ENCODE measurements at regions of chr5 and their contacts with region 1.

Region 1: GRCh38 chr5:39714036-39714698 is 289.4 kb upstream of the DAB2 start:
- DNase-seq: peak; percentile 68
- ATAC-seq: peak; percentile 69; the same call in 1 of the 2 replicates
- H3K4me3 ChIP-seq: no peak overlapping the region
- H3K27ac ChIP-seq: no peak overlapping the region
- H3K4me1 ChIP-seq: peaks cover 8% of the 10 kb centered on the region
- H3K27me3 ChIP-seq: no peaks in the 10 kb centered on the region
- CTCF ChIP-seq: peak; percentile 84
- POLR2A ChIP-seq: no peak
- RAD21 ChIP-seq: peak; percentile 89

Region 2: GRCh38 chr5:39578887-39579497 is 135.2 kb before region 1 on chr5:
- CTCF ChIA-PET with region 1: interaction called, 3 read pairs
- POLR2A ChIA-PET with region 1: no interaction called
- dilution Hi-C with region 1: no loop called
- in situ Hi-C with region 1: no loop called
- intact Hi-C with region 1: loop called (anchors 5 kb)
- DNase-seq: peak; percentile 49
- ATAC-seq: no peak
- H3K4me3 ChIP-seq: no peak overlapping the region
- H3K27ac ChIP-seq: no peak overlapping the region
- H3K4me1 ChIP-seq: no peaks in the 10 kb centered on the region
- H3K27me3 ChIP-seq: peaks cover 7% of the 10 kb centered on the region
- CTCF ChIP-seq: peak; percentile 61
- POLR2A ChIP-seq: no peak
- RAD21 ChIP-seq: peak; percentile 64

Region 3: DNA sequence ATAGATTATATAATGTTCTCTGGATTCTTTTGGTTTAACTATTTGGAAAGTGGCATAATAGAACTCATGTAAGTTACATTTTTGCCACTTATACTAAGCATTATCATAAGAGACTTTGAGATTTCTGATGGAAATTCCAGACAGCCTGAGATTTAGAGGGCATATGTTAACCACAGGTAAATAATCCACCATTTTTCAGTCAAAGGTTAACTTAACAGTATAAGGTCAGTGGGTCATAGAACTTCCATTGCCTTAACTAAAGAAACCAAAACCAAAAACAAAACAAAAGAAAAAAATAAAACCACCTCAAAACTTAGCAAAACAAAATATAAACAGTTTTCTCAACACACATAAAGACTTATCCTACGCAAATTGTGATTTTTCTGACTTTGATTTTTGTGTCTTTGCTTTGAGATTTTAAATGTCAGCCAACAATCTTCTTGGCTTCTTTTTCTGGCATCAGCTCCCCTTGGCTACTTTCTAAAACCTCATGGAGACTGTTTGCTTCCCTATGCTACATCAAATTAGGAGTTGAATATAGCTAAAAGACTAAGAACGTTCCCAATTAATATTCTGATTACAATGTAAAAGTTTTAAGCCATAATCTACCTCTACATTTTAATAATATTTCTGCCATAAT is 140.7 kb after region 1 on chr5:
- CTCF ChIA-PET with region 1: no interaction called
- POLR2A ChIA-PET with region 1: no interaction called
- dilution Hi-C with region 1: no loop called
- in situ Hi-C with region 1: no loop called
- intact Hi-C with region 1: no loop called
- DNase-seq: no peak
- ATAC-seq: no peak
- H3K4me3 ChIP-seq: no peak overlapping the region
- H3K27ac ChIP-seq: no peak overlapping the region
- H3K4me1 ChIP-seq: no peaks in the 10 kb centered on the region
- H3K27me3 ChIP-seq: no peaks in the 10 kb centered on the region; the same call in 1 of the 2 replicates
- CTCF ChIP-seq: no peak
- POLR2A ChIP-seq: no peak
- RAD21 ChIP-seq: no peak

Region 4: DNA sequence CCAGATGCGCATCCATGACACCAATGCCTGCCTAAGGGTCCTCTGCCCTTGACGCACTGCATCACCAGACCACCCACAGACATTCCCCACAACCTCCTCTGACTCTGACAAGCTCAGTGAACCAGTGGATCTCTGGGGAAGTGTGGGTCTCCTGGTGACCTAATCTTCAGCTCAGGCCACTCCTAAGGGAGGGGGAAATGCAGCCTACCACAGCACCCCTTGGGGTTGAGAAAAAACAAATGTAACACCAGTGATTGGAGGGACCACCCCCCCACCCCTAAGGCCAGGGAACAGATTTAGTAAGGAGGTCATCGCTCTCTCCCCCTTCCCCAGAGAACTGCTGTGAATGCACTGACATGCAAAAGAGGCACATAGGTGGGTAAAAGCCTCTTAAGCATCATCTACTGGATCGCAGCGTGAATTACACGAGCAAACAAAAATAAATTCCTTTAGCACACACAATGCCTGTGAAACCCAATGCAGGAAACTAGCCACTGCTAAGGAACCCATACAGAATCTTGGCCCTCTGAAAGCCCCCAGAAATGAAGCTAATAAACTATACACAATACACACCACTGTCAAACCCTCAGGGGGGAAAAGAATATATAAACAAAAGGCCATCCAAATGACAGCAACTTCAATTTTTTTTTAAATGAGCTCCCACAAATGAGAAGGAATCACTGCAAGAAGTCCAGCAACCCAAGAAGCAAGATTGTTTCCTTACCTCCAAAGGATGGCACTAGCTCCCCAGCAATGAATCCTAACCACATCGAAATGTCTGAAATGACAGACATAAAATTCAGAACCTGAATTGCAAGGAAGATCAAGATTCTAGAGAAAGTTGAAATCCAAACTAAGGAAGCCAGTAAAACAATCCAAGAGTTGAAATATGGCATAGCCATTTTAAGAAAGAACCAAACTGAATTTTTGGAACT is 451.9 kb after region 1 on chr5:
- CTCF ChIA-PET with region 1: interaction called, 3 read pairs
- POLR2A ChIA-PET with region 1: no interaction called
- dilution Hi-C with region 1: no loop called
- in situ Hi-C with region 1: no loop called
- intact Hi-C with region 1: loop called (anchors 10 kb)
- DNase-seq: peak; percentile 19
- ATAC-seq: no peak
- H3K4me3 ChIP-seq: no peak overlapping the region
- H3K27ac ChIP-seq: no peak overlapping the region
- H3K4me1 ChIP-seq: no peaks in the 10 kb centered on the region
- H3K27me3 ChIP-seq: no peaks in the 10 kb centered on the region
- CTCF ChIP-seq: peak; percentile 27; the same call in 1 of the 2 replicates
- POLR2A ChIP-seq: no peak
- RAD21 ChIP-seq: peak; percentile 53

Region 5: GRCh38 chr5:40502736-40503135 is 788.6 kb after region 1 on chr5:
- CTCF ChIA-PET with region 1: no interaction called
- POLR2A ChIA-PET with region 1: no interaction called
- dilution Hi-C with region 1: no loop called
- in situ Hi-C with region 1: no loop called
- intact Hi-C with region 1: loop called (anchors 10 kb)
- DNase-seq: no peak
- ATAC-seq: no peak
- H3K4me3 ChIP-seq: no peak overlapping the region
- H3K27ac ChIP-seq: no peak overlapping the region
- H3K4me1 ChIP-seq: peaks cover 2% of the 10 kb centered on the region; the same call in 1 of the 2 replicates
- H3K27me3 ChIP-seq: no peaks in the 10 kb centered on the region
- CTCF ChIP-seq: no peak
- POLR2A ChIP-seq: no peak
- RAD21 ChIP-seq: no peak

Region 6: GRCh38 chr5:40688127-40688761 is 974.1 kb after region 1 on chr5:
- CTCF ChIA-PET with region 1: interaction called, 4 read pairs
- POLR2A ChIA-PET with region 1: interaction called, 3 read pairs
- dilution Hi-C with region 1: no loop called
- in situ Hi-C with region 1: loop called (anchors 5 kb)
- intact Hi-C with region 1: loop called (anchors 1 kb)
- DNase-seq: peak; percentile 89
- ATAC-seq: peak; percentile 86
- H3K4me3 ChIP-seq: no peak overlapping the region
- H3K27ac ChIP-seq: peak overlapping the region; percentile 26; the same call in 1 of the 2 replicates
- H3K4me1 ChIP-seq: peaks cover 5% of the 10 kb centered on the region
- H3K27me3 ChIP-seq: no peaks in the 10 kb centered on the region
- CTCF ChIP-seq: peak; percentile 91
- POLR2A ChIP-seq: no peak; the same call in 1 of the 2 replicates
- RAD21 ChIP-seq: peak; percentile 98

Region 7: GRCh38 chr5:40879163-40879942 is 1165.2 kb after region 1 on chr5:
- CTCF ChIA-PET with region 1: no interaction called
- POLR2A ChIA-PET with region 1: no interaction called
- dilution Hi-C with region 1: no loop called
- in situ Hi-C with region 1: no loop called
- intact Hi-C with region 1: loop called (anchors 10 kb)
- DNase-seq: peak; percentile 45
- ATAC-seq: peak; percentile 79
- H3K4me3 ChIP-seq: no peak overlapping the region
- H3K27ac ChIP-seq: no peak overlapping the region
- H3K4me1 ChIP-seq: no peaks in the 10 kb centered on the region
- H3K27me3 ChIP-seq: no peaks in the 10 kb centered on the region; the same call in 1 of the 2 replicates
- CTCF ChIP-seq: peak; percentile 60
- POLR2A ChIP-seq: no peak
- RAD21 ChIP-seq: peak; percentile 61